ENCODE measurements at regions of chr7 and their contacts with region 1.

Region 1: GRCh38 chr7:118104812-118105441 is 79.0 kb upstream of the LSM8 start:
- H3K4me3 Mint-ChIP-seq: no peak overlapping the region
- H3K27ac Mint-ChIP-seq: no peak overlapping the region
- H3K4me1 Mint-ChIP-seq: no peaks in the 10 kb centered on the region
- H3K27me3 Mint-ChIP-seq: no peaks in the 10 kb centered on the region

Region 2: GRCh38 chr7:117458977-117459583 is 645.8 kb before region 1 on chr7:
- intact Hi-C with region 1: loop called (anchors 2 kb)
- H3K4me3 Mint-ChIP-seq: no peak overlapping the region
- H3K27ac Mint-ChIP-seq: no peak overlapping the region
- H3K4me1 Mint-ChIP-seq: no peaks in the 10 kb centered on the region
- H3K27me3 Mint-ChIP-seq: no peaks in the 10 kb centered on the region

Region 3: GRCh38 chr7:118264836-118265235 is 159.9 kb after region 1 on chr7:
- intact Hi-C with region 1: no loop called
- H3K4me3 Mint-ChIP-seq: no peak overlapping the region
- H3K27ac Mint-ChIP-seq: no peak overlapping the region
- H3K4me1 Mint-ChIP-seq: no peaks in the 10 kb centered on the region
- H3K27me3 Mint-ChIP-seq: peaks cover 50% of the 10 kb centered on the region

Measured in dendritic cell treated with granulocyte-macrophage colony-stimulating factor and Interleukin-4, amounts not matched to agents 40 ng/mL and 50 ng/mL, for 4 days (primary cell).